Tibial artery (tissue), 4 donors: ENCODE measurements at regions of chrX and their contacts with region 1.

Region 1: GRCh38 chrX:53211391-53211978 is 13.5 kb downstream of the KDM5C start:
- DNase-seq: no peak
- H3K4me3 ChIP-seq: no peak overlapping the region
- H3K27ac ChIP-seq: no peak overlapping the region
- H3K4me1 ChIP-seq: no peaks in the 10 kb centered on the region
- H3K27me3 ChIP-seq: no peaks in the 10 kb centered on the region
- CTCF ChIP-seq: no peak

Region 2: DNA sequence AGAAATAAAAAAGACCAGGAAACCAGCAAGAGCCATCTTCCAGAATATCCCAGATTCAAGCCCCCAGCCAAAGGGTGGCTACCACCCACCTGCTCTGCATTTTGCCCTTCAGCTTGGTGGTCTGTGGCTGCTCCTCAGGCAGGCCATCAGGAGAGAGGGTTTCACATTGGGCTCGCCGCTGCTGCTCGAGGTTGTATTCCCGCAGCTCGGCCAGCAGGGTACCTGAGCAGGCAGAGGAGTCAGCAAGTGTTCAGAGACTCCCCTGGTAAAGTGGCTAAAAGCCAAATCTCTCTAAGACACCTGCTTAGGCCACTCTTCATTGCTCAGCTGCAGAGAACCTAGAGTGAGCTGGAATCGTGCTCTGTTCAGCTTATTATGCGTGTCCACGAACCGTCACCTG is 333.5 kb after region 1 on chrX:
- intact Hi-C with region 1: loop called (anchors 5 kb)
- DNase-seq: no peak
- H3K4me3 ChIP-seq: no peak overlapping the region
- H3K27ac ChIP-seq: no peak overlapping the region
- H3K4me1 ChIP-seq: no peaks in the 10 kb centered on the region
- H3K27me3 ChIP-seq: no peaks in the 10 kb centered on the region
- CTCF ChIP-seq: no peak